CD4-positive, alpha-beta T cell (primary cell): ENCODE measurements at regions of chr4 and their contacts with region 1.

Region 1: GRCh38 chr4:35520065-35520464 is 724.2 kb downstream of the ARAP2 start:
- DNase-seq: no peak
- ATAC-seq: no peak
- H3K4me3 ChIP-seq: no peak overlapping the region
- H3K4me3 Mint-ChIP-seq: no peak overlapping the region
- H3K27ac ChIP-seq: no peak overlapping the region
- H3K27ac Mint-ChIP-seq: no peak overlapping the region
- H3K4me1 ChIP-seq: no peaks in the 10 kb centered on the region
- H3K4me1 Mint-ChIP-seq: no peaks in the 10 kb centered on the region
- H3K27me3 ChIP-seq: no peaks in the 10 kb centered on the region
- H3K27me3 Mint-ChIP-seq: no peaks in the 10 kb centered on the region
- CTCF ChIP-seq: no peak

Region 2: GRCh38 chr4:35565640-35566039 is 45.6 kb after region 1 on chr4:
- CTCF ChIA-PET with region 1: no interaction called
- POLR2A ChIA-PET with region 1: no interaction called
- intact Hi-C with region 1: loop called in 1 of 2 experiments (anchors 5 kb)
- DNase-seq: no peak
- ATAC-seq: no peak
- H3K4me3 ChIP-seq: no peak overlapping the region
- H3K4me3 Mint-ChIP-seq: no peak overlapping the region
- H3K27ac ChIP-seq: no peak overlapping the region
- H3K27ac Mint-ChIP-seq: no peak overlapping the region
- H3K4me1 ChIP-seq: no peaks in the 10 kb centered on the region
- H3K4me1 Mint-ChIP-seq: no peaks in the 10 kb centered on the region
- H3K27me3 ChIP-seq: no peaks in the 10 kb centered on the region
- H3K27me3 Mint-ChIP-seq: no peaks in the 10 kb centered on the region
- CTCF ChIP-seq: no peak